ENCODE measurements at regions of chr3 and their contacts with region 1.

Region 1: DNA sequence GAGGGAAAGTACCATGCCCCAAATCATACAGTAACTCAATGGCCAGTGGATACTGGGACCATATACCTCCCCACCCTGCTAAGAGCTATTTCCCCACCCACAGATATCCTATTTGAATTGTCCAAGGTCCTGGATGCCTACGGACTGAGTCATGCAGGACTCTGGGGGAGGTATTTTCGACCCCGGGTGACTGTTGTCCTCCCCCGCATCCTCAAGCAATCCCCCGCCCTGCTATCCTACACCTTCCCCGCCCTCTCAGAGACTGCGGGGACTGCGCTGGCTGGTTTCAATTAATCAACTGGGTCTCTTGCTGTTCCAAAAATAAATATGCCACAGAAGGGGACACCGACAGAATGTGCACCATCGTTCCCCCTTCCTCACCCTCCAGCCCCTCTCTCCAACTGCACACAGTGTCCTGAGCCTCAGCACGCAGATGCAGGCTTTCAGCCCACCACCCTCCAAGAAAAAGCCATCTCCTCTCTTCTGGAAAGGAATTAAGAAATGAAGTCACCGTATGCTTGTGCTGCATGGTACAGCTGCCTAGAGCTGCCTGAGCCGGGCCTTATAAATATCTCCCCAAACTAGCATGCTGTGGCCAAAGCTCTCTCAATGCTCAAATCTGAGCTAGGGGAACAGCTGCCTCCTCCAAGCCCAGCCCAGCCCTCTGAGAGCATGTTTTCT is 8.1 kb downstream of the CAV3 start:
- DNase-seq: peak; percentile 86
- ATAC-seq: peak; percentile 82
- H3K4me3 ChIP-seq: no peak overlapping the region
- H3K27ac ChIP-seq: peak overlapping the region; percentile 2; the same call in 1 of the 2 replicates
- H3K4me1 ChIP-seq: peaks cover 17% of the 10 kb centered on the region
- H3K27me3 ChIP-seq: no peaks in the 10 kb centered on the region
- CTCF ChIP-seq: no peak
- POLR2A ChIP-seq: no peak
- RAD21 ChIP-seq: no peak

Region 2: GRCh38 chr3:8357859-8358258 is 383.9 kb before region 1 on chr3:
- CTCF ChIA-PET with region 1: no interaction called
- POLR2A ChIA-PET with region 1: interaction called, 11 read pairs
- dilution Hi-C with region 1: no loop called
- in situ Hi-C with region 1: no loop called
- intact Hi-C with region 1: no loop called
- DNase-seq: no peak
- ATAC-seq: no peak
- H3K4me3 ChIP-seq: no peak overlapping the region
- H3K27ac ChIP-seq: no peak overlapping the region
- H3K4me1 ChIP-seq: no peaks in the 10 kb centered on the region
- H3K27me3 ChIP-seq: no peaks in the 10 kb centered on the region; the same call in 1 of the 2 replicates
- CTCF ChIP-seq: no peak
- POLR2A ChIP-seq: no peak
- RAD21 ChIP-seq: no peak